MCF 10A (cell line): ENCODE measurements at regions of chr1 and their contacts with region 1.

Region 1: DNA sequence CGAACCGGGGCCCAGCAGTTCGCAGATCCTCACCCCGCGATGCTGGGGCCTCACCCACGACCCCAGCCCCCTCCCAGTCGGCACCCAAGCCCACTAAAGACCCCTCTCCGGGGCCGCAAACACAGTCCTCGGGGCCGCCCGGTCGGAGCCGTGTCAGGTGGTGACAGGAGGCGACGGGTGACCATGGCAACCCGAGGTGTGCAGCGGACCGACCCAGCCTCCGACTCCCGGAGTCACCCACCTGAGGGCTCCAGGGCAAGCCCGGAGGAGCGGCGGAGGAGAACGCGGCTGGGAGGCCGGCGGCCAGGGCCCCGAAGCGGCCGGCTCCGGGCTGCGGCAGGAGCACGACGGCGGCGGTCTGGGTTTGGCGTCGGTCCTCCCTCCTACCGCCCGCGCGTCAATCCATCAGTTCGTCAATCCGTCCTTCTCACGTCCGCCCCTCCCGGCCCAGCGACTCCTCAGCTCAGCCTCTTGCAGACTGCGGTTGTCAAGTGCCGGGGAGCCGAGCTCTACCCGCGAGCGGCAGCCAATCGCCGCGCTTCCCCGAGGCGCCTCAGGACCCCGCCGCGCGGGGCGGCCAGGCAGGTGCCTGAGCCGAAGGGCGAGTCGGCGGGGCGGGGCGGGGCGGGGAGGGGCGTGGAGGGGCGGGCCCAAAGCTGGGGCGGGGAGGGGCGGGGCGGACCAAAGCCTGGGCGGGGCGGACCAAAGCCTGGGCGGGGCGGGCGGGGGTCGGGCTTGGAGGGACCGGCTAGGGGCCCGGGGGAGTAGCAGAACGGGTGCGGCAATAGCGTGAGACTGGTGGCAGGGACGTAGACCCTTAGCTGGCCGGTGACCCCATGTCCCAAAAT is at the start of gene WDR47:
- DNase-seq: peak; percentile 96
- H3K4me3 Mint-ChIP-seq: peak within 1 kb of the TSS; percentile 94
- H3K27ac Mint-ChIP-seq: peak within 1 kb of the TSS; percentile 78
- H3K4me1 Mint-ChIP-seq: peaks cover 6% of the 10 kb centered on the region
- H3K27me3 Mint-ChIP-seq: no peaks in the 10 kb centered on the region
- CTCF ChIP-seq: no peak
- total RNA-seq, gene WDR47: 16.1 and 17.8 TPM in 2 replicates

Region 2: GRCh38 chr1:109027841-109028240 is 14.0 kb before region 1 on chr1:
- CTCF ChIA-PET with region 1: interaction called, 10 read pairs
- POLR2A ChIA-PET with region 1: interaction called, 3 read pairs
- intact Hi-C with region 1: no loop called
- DNase-seq: no peak
- H3K4me3 Mint-ChIP-seq: no peak overlapping the region
- H3K27ac Mint-ChIP-seq: no peak overlapping the region
- H3K4me1 Mint-ChIP-seq: no peaks in the 10 kb centered on the region
- H3K27me3 Mint-ChIP-seq: no peaks in the 10 kb centered on the region
- CTCF ChIP-seq: peak; percentile 7

Region 3: DNA sequence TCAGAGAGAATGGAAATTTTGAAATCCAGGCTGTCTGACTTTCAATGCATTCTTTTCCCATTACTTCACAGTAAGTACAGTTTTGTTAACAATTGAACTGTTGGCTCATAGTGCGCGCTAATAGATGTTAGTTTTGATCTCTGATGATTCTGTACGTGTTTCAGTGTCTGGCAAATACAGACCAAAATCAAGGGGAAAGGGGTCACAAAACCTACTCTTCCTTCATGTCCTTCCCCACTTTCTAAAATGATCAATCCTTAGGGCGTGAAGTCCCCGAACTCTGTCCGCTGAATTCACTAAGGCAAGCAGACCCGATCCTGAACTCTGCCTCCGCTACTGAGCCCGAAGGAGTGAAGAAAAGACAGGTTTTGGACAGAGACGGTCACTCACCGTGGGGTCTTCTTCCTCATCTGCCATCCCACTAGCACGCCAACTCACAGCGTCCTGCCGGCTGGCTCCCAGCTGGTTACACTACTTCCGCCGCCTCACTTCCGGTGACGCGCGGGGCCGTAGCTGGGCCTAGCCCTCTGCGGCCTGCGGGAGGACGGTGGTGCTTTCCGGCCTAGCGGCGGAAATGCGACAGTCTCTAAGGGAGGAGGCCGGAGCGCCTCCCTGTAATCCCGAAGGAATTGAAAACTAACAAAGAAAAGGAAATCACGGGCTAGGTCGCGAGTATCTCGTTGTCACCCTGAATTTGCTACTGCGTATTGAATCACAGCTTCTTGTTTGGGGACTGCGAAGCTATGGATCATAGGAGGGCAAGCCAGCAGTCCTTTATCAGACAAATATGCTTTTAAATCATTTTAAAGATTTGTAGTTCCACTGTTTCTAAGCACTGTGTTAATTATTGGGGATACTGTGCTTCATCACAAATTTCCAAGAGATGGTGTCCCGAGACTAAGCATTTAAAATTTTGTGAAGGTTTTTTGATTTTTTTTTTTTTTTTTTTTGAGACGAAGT is 34.0 kb after region 1 on chr1 and contains the start of gene TAF13:
- CTCF ChIA-PET with region 1: no interaction called
- POLR2A ChIA-PET with region 1: interaction called, 17 read pairs
- intact Hi-C with region 1: no loop called
- DNase-seq: peak; percentile 93
- H3K4me3 Mint-ChIP-seq: peak within 1 kb of the TSS; percentile 99
- H3K27ac Mint-ChIP-seq: peak within 1 kb of the TSS; percentile 100
- H3K4me1 Mint-ChIP-seq: peaks cover 5% of the 10 kb centered on the region
- H3K27me3 Mint-ChIP-seq: no peaks in the 10 kb centered on the region
- CTCF ChIP-seq: no peak
- total RNA-seq, gene TAF13: 76.7 and 88.2 TPM in 2 replicates

Region 4: GRCh38 chr1:109084563-109085517 is 43.0 kb after region 1 on chr1:
- CTCF ChIA-PET with region 1: interaction called, 11 read pairs
- POLR2A ChIA-PET with region 1: interaction called, 54 read pairs
- intact Hi-C with region 1: no loop called
- DNase-seq: no peak
- H3K4me3 Mint-ChIP-seq: no peak overlapping the region
- H3K27ac Mint-ChIP-seq: no peak overlapping the region
- H3K4me1 Mint-ChIP-seq: no peaks in the 10 kb centered on the region
- H3K27me3 Mint-ChIP-seq: no peaks in the 10 kb centered on the region
- CTCF ChIP-seq: no peak

Region 5: GRCh38 chr1:109181105-109181806 is 139.4 kb after region 1 on chr1:
- CTCF ChIA-PET with region 1: no interaction called
- POLR2A ChIA-PET with region 1: no interaction called
- intact Hi-C with region 1: no loop called
- DNase-seq: no peak
- H3K4me3 Mint-ChIP-seq: no peak overlapping the region
- H3K27ac Mint-ChIP-seq: no peak overlapping the region
- H3K4me1 Mint-ChIP-seq: peaks cover 11% of the 10 kb centered on the region
- H3K27me3 Mint-ChIP-seq: no peaks in the 10 kb centered on the region
- CTCF ChIP-seq: no peak